ENCODE measurements at regions of chr12 and their contacts with region 1.

Region 1: GRCh38 chr12:94459728-94460615 is at the start of gene CEP83:
- DNase-seq: peak; percentile 89 to 97 (median 94)
- ATAC-seq: peak; percentile 99
- H3K4me3 ChIP-seq: peak within 1 kb of the TSS; percentile 68
- H3K4me3 Mint-ChIP-seq: peak within 1 kb of the TSS; percentile 92 to 98 (median 96)
- H3K27ac ChIP-seq: peak within 1 kb of the TSS; percentile 91
- H3K27ac Mint-ChIP-seq: peak within 1 kb of the TSS; percentile 70 to 97 (median 94)
- H3K4me1 ChIP-seq: peaks cover 3 to 13% of the 10 kb centered on the region in 2 donors
- H3K4me1 Mint-ChIP-seq: peaks cover 10 to 38% (median 30%) of the 10 kb centered on the region in 7 donors
- H3K27me3 ChIP-seq: no peaks in the 10 kb centered on the region
- H3K27me3 Mint-ChIP-seq: peaks cover 0 to 12% (median 6%) of the 10 kb centered on the region in 5 donors
- total RNA-seq, gene CEP83: 12.8 to 22.7 (median 16.8) TPM

Region 2: GRCh38 chr12:93441617-93442410 is 1018.2 kb before region 1 on chr12 and contains the start of gene UBE2N:
- CTCF ChIA-PET with region 1: no interaction called
- POLR2A ChIA-PET with region 1: interaction called, 3 read pairs
- intact Hi-C with region 1: loop called (anchors 1 kb)
- DNase-seq: peak; percentile 96 to 98 (median 97)
- ATAC-seq: peak; percentile 95
- H3K4me3 ChIP-seq: peak within 1 kb of the TSS; percentile 66
- H3K4me3 Mint-ChIP-seq: peak within 1 kb of the TSS; percentile 89 to 100 (median 97)
- H3K27ac ChIP-seq: peak within 1 kb of the TSS; percentile 98
- H3K27ac Mint-ChIP-seq: peak within 1 kb of the TSS; percentile 96 to 100 (median 98)
- H3K4me1 ChIP-seq: peaks cover 35 to 48% of the 10 kb centered on the region in 2 donors
- H3K4me1 Mint-ChIP-seq: peaks cover 44 to 54% (median 49%) of the 10 kb centered on the region in 7 donors
- H3K27me3 ChIP-seq: no peaks in the 10 kb centered on the region
- H3K27me3 Mint-ChIP-seq: no peaks in the 10 kb centered on the region
- total RNA-seq, gene UBE2N: 76.6 to 180 (median 77.5) TPM

Region 3: DNA sequence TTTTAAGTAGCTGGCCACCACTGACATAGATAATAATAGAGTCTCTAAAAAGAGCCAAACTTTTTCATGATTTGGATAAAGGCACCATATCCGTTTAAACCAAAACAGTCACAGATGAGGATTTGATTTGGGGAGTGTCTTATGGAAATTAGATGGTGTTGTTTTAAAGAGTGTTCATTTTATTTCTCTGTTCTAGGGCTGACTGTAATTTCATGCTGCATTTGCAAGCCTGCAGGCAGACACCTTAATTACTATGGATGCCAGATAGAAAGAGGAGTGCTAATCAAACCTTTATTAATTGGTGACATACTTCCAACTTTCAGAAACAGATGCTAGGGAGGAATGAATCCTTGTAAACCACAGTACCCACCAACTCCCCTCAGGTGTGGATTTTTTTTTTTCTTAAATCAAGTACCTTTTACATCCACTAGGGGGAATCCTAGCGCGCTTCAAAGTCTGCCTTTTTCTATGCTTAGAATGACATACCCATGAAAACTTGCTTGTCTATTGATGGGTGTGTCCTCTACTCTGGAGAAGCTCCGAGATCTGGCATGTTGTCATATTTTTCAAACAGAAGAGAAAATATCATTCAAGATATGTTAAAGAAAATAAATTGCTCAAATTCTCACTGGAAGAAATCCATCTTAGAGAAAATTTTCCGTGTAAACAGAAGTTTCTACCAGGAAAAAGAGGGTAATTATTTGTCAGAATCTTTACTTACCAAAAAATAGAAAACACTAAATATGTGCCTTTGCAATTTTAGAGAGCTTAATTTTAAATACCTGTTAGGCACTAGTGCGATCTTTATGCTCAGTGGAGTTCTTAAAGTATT is 325.8 kb before region 1 on chr12:
- CTCF ChIA-PET with region 1: no interaction called
- POLR2A ChIA-PET with region 1: no interaction called
- intact Hi-C with region 1: loop called in 1 of 2 experiments (anchors 1 kb)
- DNase-seq: peak in 7 of 9 donors; percentile 34 to 65 (median 59)
- ATAC-seq: peak; percentile 97
- H3K4me3 ChIP-seq: no peak overlapping the region
- H3K4me3 Mint-ChIP-seq: no peak overlapping the region
- H3K27ac ChIP-seq: no peak overlapping the region
- H3K27ac Mint-ChIP-seq: peak overlapping the region in 2 of 9 donors; percentile 16 to 28
- H3K4me1 ChIP-seq: no peaks in the 10 kb centered on the region
- H3K4me1 Mint-ChIP-seq: peaks cover 0 to 10% (median 4%) of the 10 kb centered on the region in 7 donors
- H3K27me3 ChIP-seq: no peaks in the 10 kb centered on the region
- H3K27me3 Mint-ChIP-seq: peaks cover 0 to 11% (median 0%) of the 10 kb centered on the region in 5 donors

Region 4: DNA sequence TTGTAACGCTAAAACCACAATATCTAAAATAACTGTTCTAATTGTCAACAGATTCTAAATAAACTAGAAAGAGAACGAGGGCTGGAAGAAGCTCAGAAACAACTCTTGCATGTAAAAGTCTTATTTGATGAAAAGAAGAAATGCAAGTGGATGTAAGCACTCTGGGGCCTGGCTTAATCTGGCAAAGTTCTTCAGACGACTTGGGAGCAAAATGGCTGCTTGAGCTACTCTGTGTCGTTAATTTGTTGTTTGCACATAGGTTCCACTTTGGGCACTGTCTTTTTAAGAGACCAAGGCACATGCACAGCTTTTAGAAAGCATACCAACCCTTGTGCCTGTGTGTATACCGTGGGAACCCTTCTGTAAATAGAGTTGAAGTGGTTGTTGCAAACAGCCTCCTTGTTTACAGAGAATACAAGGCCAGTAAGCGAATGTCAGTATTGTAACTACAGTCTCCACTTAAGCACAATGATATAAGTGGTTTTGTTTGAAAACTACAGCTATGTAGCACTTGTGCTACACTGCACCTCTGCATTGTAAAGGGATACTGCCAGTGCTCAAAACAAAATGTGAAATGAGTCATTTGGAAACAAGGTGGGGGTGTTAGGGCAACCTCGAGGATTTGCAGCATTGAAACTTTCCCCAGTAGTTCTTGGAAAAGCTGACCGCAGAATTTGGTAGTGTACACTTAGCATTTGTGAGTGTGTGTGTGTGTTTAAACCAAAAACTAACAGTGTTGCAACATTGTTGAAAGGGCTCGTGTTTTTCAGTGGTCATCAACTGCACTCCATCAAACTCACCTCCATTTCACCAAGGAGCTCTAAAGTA is 154.6 kb before region 1 on chr12:
- CTCF ChIA-PET with region 1: no interaction called
- POLR2A ChIA-PET with region 1: interaction called, 4 read pairs
- intact Hi-C with region 1: loop called in 1 of 2 experiments (anchors 1 kb)
- DNase-seq: peak in 1 of 9 donors; percentile 69
- ATAC-seq: no peak
- H3K4me3 ChIP-seq: no peak overlapping the region
- H3K4me3 Mint-ChIP-seq: peak overlapping the region in 1 of 10 donors; percentile 70
- H3K27ac ChIP-seq: no peak overlapping the region
- H3K27ac Mint-ChIP-seq: peak overlapping the region in 1 of 9 donors; percentile 87
- H3K4me1 ChIP-seq: no peaks in the 10 kb centered on the region
- H3K4me1 Mint-ChIP-seq: peaks cover 0 to 57% (median 0%) of the 10 kb centered on the region in 7 donors
- H3K27me3 ChIP-seq: no peaks in the 10 kb centered on the region
- H3K27me3 Mint-ChIP-seq: no peaks in the 10 kb centered on the region

Region 5: GRCh38 chr12:95003213-95003920 is 543.4 kb after region 1 on chr12 and contains the start of gene NDUFA12:
- CTCF ChIA-PET with region 1: no interaction called
- POLR2A ChIA-PET with region 1: no interaction called
- intact Hi-C with region 1: loop called (anchors 1 kb)
- DNase-seq: peak; percentile 89 to 95 (median 92)
- ATAC-seq: peak; percentile 100
- H3K4me3 ChIP-seq: peak within 1 kb of the TSS; percentile 72
- H3K4me3 Mint-ChIP-seq: peak within 1 kb of the TSS; percentile 87 to 97 (median 96)
- H3K27ac ChIP-seq: peak within 1 kb of the TSS; percentile 84
- H3K27ac Mint-ChIP-seq: peak within 1 kb of the TSS; percentile 86 to 97 (median 95)
- H3K4me1 ChIP-seq: peaks cover 27 to 56% of the 10 kb centered on the region in 2 donors
- H3K4me1 Mint-ChIP-seq: peaks cover 39 to 79% (median 64%) of the 10 kb centered on the region in 7 donors
- H3K27me3 ChIP-seq: no peaks in the 10 kb centered on the region
- H3K27me3 Mint-ChIP-seq: no peaks in the 10 kb centered on the region
- total RNA-seq, gene NDUFA12: 57.8 to 123 (median 68.5) TPM

Region 6: DNA sequence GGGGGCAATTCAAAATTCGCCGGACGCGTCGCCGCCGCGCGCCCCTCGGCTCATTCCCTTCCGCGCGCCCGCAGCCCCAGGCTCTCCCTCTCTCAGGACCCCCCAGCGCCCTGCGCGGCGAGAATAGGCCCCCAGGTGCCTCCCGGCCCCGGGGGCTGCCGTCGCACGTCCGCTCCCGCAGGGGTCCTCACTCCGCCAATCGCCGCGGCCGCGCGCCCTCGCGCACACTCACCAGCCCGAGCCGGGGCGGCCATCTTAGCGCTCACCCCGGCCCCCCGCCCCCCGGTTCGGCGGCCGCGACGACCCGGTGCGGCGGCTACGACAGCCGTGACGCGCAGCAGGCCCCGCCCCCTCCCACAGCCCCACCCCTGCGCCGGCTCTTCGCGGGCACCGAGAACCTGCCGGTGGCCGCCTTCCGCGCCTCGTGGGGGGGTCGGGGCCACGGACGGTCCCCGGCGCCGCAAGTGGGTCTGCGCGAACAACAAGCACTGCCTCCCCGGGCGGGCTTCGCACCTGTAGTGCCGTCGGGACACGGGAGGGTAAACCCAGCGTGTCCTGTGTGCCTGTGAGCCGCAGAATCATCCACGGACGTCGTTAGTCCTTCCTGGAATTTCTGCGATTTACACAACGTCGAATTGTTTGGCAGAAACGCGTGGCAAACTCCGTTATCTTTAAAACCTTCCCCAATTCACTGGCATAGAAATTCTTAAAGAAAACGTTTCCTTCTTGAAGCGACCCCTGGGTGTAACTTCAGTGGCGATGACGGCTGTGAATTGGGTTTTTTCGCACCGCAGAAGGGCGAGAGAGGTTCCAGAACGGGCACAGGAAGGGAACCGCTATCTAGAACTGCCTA is 1088.8 kb after region 1 on chr12:
- CTCF ChIA-PET with region 1: no interaction called
- POLR2A ChIA-PET with region 1: no interaction called
- intact Hi-C with region 1: loop called in 1 of 2 experiments (anchors 2 kb)
- DNase-seq: peak; percentile 66 to 81 (median 77)
- ATAC-seq: peak; percentile 94
- H3K4me3 ChIP-seq: peak overlapping the region; percentile 75
- H3K4me3 Mint-ChIP-seq: peak overlapping the region; percentile 89 to 96 (median 94)
- H3K27ac ChIP-seq: peak overlapping the region; percentile 96
- H3K27ac Mint-ChIP-seq: peak overlapping the region; percentile 70 to 98 (median 94)
- H3K4me1 ChIP-seq: peaks cover 6 to 23% of the 10 kb centered on the region in 2 donors
- H3K4me1 Mint-ChIP-seq: peaks cover 36 to 73% (median 61%) of the 10 kb centered on the region in 7 donors
- H3K27me3 ChIP-seq: no peaks in the 10 kb centered on the region
- H3K27me3 Mint-ChIP-seq: peaks cover 0 to 22% (median 7%) of the 10 kb centered on the region in 5 donors

Measured in naive thymus-derived CD4-positive, alpha-beta T cell (primary cell).